ENCODE measurements at regions of chr6 and their contacts with region 1.

Region 1: DNA sequence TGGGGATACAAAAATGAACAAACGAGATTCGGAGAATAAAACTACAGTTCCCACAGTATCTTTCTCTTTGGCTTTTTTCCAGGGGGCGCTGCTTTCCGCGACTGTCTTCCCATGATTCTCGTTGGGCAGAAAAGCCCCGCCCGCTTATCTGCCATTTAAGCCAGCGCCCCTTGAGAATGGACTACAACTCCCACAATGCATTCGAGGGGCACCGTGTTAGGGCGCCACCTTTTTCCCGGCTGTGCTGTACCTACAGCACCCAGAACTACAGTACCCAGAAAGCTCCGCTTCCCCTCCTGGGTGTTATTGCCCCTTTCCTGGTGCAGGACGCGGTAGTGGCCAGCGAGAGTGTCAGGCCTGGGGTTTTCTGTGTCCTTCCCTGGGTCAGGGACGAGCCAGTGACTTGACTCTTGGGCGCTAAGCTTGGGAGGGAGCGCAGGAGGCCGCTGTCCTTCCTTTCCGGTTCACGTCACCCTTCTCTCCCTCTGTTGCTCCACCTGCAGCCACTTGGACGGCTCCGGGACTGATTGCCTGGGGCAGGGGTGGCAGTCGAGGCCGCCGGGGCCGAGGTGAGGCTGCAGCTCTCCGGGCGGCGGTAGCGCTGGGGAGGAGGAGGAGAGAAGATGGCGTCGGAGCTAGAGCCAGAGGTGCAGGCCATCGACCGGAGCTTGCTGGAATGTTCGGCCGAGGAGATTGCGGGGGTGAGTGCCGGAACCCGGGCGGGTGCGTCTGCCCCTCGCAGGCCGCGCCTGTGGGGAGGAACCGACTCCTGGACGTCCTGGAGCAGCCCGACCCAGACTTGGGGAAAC is at the start of gene UBR2:
- DNase-seq: peak; percentile 81 to 98 (median 90)
- ATAC-seq: peak; percentile 95
- H3K4me3 ChIP-seq: peak within 1 kb of the TSS; percentile 99
- H3K4me3 Mint-ChIP-seq: peak within 1 kb of the TSS; percentile 98
- H3K27ac ChIP-seq: peak within 1 kb of the TSS; percentile 87 to 93
- H3K27ac Mint-ChIP-seq: peak within 1 kb of the TSS; percentile 98
- H3K4me1 ChIP-seq: peaks cover 16% of the 10 kb centered on the region
- H3K4me1 Mint-ChIP-seq: peaks cover 38% of the 10 kb centered on the region
- H3K27me3 ChIP-seq: no peaks in the 10 kb centered on the region
- H3K27me3 Mint-ChIP-seq: no peaks in the 10 kb centered on the region
- CTCF ChIP-seq: peak; percentile 52
- total RNA-seq, gene UBR2: 27.4 to 27.7 TPM

Region 2: GRCh38 chr6:41787219-41787917 is 776.5 kb before region 1 on chr6 and contains the start of gene TOMM6:
- CTCF ChIA-PET with region 1: interaction called, 14 read pairs
- POLR2A ChIA-PET with region 1: interaction called, 14 read pairs
- intact Hi-C with region 1: loop called (anchors 5 to 10 kb)
- DNase-seq: peak; percentile 91 to 97 (median 93)
- ATAC-seq: peak; percentile 77
- H3K4me3 ChIP-seq: peak within 1 kb of the TSS; percentile 78
- H3K4me3 Mint-ChIP-seq: peak within 1 kb of the TSS; percentile 92
- H3K27ac ChIP-seq: peak within 1 kb of the TSS; percentile 87 to 89
- H3K27ac Mint-ChIP-seq: peak within 1 kb of the TSS; percentile 96
- H3K4me1 ChIP-seq: peaks cover 23% of the 10 kb centered on the region
- H3K4me1 Mint-ChIP-seq: peaks cover 27% of the 10 kb centered on the region
- H3K27me3 ChIP-seq: no peaks in the 10 kb centered on the region
- H3K27me3 Mint-ChIP-seq: no peaks in the 10 kb centered on the region
- CTCF ChIP-seq: peak; percentile 90
- total RNA-seq, gene TOMM6: 78.8 to 83.2 TPM

Region 3: GRCh38 chr6:41895300-41896233 is 668.3 kb before region 1 on chr6 and contains the start of gene USP49:
- CTCF ChIA-PET with region 1: no interaction called
- POLR2A ChIA-PET with region 1: no interaction called
- intact Hi-C with region 1: no loop called
- DNase-seq: peak; percentile 79 to 96 (median 88)
- ATAC-seq: peak; percentile 93
- H3K4me3 ChIP-seq: peak within 1 kb of the TSS; percentile 84
- H3K4me3 Mint-ChIP-seq: no peak within 1 kb of the TSS
- H3K27ac ChIP-seq: peak within 1 kb of the TSS; percentile 77 to 80
- H3K27ac Mint-ChIP-seq: no peak within 1 kb of the TSS
- H3K4me1 ChIP-seq: peaks cover 21% of the 10 kb centered on the region
- H3K4me1 Mint-ChIP-seq: peaks cover 12% of the 10 kb centered on the region
- H3K27me3 ChIP-seq: no peaks in the 10 kb centered on the region
- H3K27me3 Mint-ChIP-seq: no peaks in the 10 kb centered on the region
- CTCF ChIP-seq: no peak
- total RNA-seq, gene USP49: 1.3 TPM

Region 4: GRCh38 chr6:42217519-42218367 is 346.2 kb before region 1 on chr6 and contains the start of gene MRPS10:
- CTCF ChIA-PET with region 1: interaction called, 3 read pairs
- POLR2A ChIA-PET with region 1: interaction called, 8 read pairs
- intact Hi-C with region 1: loop called in 1 of 2 experiments (anchors 1 kb)
- DNase-seq: peak; percentile 84 to 96 (median 86)
- ATAC-seq: peak; percentile 98
- H3K4me3 ChIP-seq: peak within 1 kb of the TSS; percentile 77
- H3K4me3 Mint-ChIP-seq: peak within 1 kb of the TSS; percentile 97
- H3K27ac ChIP-seq: peak within 1 kb of the TSS; percentile 60 to 65
- H3K27ac Mint-ChIP-seq: peak within 1 kb of the TSS; percentile 92
- H3K4me1 ChIP-seq: peaks cover 26% of the 10 kb centered on the region
- H3K4me1 Mint-ChIP-seq: peaks cover 23% of the 10 kb centered on the region
- H3K27me3 ChIP-seq: no peaks in the 10 kb centered on the region
- H3K27me3 Mint-ChIP-seq: no peaks in the 10 kb centered on the region
- CTCF ChIP-seq: no peak
- total RNA-seq, gene MRPS10: 17.1 to 18.4 TPM

Region 5: GRCh38 chr6:42493914-42494539 is 69.9 kb before region 1 on chr6:
- CTCF ChIA-PET with region 1: no interaction called
- POLR2A ChIA-PET with region 1: no interaction called
- intact Hi-C with region 1: no loop called
- DNase-seq: no peak
- ATAC-seq: no peak
- H3K4me3 ChIP-seq: no peak overlapping the region
- H3K4me3 Mint-ChIP-seq: no peak overlapping the region
- H3K27ac ChIP-seq: no peak overlapping the region
- H3K27ac Mint-ChIP-seq: no peak overlapping the region
- H3K4me1 ChIP-seq: no peaks in the 10 kb centered on the region
- H3K4me1 Mint-ChIP-seq: no peaks in the 10 kb centered on the region
- H3K27me3 ChIP-seq: no peaks in the 10 kb centered on the region
- H3K27me3 Mint-ChIP-seq: no peaks in the 10 kb centered on the region
- CTCF ChIP-seq: no peak

Region 6: DNA sequence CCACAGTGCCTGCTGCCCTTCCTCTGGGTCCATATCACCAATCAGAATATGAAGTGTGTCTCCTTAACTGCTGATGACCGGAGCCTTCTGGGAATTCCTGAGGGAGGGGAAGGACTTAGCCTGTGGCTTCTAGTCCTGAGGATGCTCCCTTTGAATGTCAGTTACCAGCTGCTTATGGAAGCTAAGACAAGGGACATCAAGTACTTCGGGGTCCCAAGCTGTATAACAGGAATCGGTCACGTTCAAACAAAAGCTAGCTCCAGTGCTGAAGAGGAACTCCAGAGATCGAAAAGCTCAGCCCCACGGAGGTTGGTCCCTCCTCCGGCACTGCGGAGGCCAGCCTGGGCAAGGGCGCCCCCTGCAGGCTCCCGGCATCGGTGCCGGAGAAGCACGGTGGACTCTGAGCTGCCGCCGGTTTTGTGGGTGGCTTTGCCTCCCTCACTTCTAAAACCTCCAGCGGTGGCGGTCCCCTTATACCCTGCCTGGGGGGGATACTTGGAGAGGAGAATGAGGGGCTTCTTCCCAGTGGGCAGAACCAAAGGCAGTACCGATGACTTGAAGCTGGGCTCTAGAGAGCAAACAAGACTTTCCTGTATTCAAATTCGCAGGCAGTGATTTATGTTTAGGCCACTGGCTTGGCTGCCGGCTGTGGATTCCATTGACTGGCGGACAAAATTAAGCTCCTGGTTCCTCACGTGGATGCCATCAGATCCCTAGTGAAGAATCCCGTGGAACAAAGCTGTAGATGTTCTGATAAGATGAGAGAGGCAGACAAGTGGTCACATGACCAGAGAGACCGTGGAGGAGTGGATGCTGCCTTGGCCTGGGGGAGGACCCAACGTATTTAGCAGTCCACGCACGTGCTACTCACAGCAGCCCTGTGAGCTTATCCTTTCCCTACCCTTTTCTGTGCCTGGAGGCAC is 16.2 kb before region 1 on chr6:
- CTCF ChIA-PET with region 1: interaction called, 26 read pairs
- POLR2A ChIA-PET with region 1: interaction called, 19 read pairs
- intact Hi-C with region 1: no loop called
- DNase-seq: peak; percentile 72 to 91 (median 86)
- ATAC-seq: peak; percentile 98
- H3K4me3 ChIP-seq: peak overlapping the region; percentile 38
- H3K4me3 Mint-ChIP-seq: peak overlapping the region; percentile 66
- H3K27ac ChIP-seq: no peak overlapping the region
- H3K27ac Mint-ChIP-seq: peak overlapping the region; percentile 65
- H3K4me1 ChIP-seq: peaks cover 11% of the 10 kb centered on the region
- H3K4me1 Mint-ChIP-seq: peaks cover 12% of the 10 kb centered on the region
- H3K27me3 ChIP-seq: no peaks in the 10 kb centered on the region
- H3K27me3 Mint-ChIP-seq: peaks cover 13% of the 10 kb centered on the region
- CTCF ChIP-seq: peak; percentile 93

Region 7: DNA sequence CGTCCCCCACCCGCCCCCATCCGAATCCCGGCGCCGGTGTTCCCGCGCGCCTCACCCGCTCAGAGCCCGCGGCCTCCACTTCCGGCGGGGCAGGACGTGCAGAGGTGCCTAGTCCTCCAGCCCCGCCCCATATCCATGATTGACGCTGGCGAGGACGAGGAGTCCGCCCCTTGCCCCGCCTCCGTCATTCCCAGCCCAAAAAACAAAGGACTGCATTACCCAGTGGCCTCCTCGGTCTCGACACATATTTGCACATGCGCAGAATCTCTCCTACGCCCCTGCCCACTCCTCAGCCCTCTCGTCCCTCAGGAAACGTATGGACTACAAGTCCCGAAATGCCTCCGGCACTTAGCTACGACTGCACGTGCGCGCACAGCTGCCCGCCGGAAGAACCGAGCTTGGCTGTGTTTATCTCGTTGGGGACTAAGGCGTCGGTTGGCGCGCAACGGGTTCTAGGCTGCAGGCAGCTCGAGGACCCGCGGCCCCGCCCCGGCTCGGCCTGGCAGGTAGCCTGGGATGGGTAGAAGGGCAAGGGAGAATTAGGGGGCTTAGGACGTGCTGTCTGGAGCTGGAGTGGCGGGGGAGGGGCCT is 450.0 kb after region 1 on chr6 and contains the starts of genes KLHDC3 and MEA1:
- CTCF ChIA-PET with region 1: no interaction called
- POLR2A ChIA-PET with region 1: interaction called, 7 read pairs
- intact Hi-C with region 1: loop called in 1 of 2 experiments (anchors 5 kb)
- DNase-seq: peak; percentile 95 to 100 (median 98)
- ATAC-seq: peak; percentile 91
- H3K4me3 ChIP-seq: peak within 1 kb of the TSS; percentile 86
- H3K4me3 Mint-ChIP-seq: peak within 1 kb of the TSS; percentile 88
- H3K27ac ChIP-seq: peak within 1 kb of the TSS; percentile 51 to 59
- H3K27ac Mint-ChIP-seq: peak within 1 kb of the TSS; percentile 81
- H3K4me1 ChIP-seq: peaks cover 55% of the 10 kb centered on the region
- H3K4me1 Mint-ChIP-seq: peaks cover 59% of the 10 kb centered on the region
- H3K27me3 ChIP-seq: no peaks in the 10 kb centered on the region
- H3K27me3 Mint-ChIP-seq: no peaks in the 10 kb centered on the region
- CTCF ChIP-seq: no peak
- total RNA-seq, gene KLHDC3: 21.0 to 22.3 TPM
- total RNA-seq, gene MEA1: 13.6 to 17.0 TPM

Measured in CD4-positive, alpha-beta T cell (primary cell).